CD8-positive, alpha-beta T cell (primary cell): ENCODE measurements at regions of chr6 and their contacts with region 1.

Region 1: GRCh38 chr6:143176090-143177021 is 115.7 kb downstream of the AIG1 start:
- DNase-seq: no peak
- ATAC-seq: no peak
- H3K4me3 ChIP-seq: no peak overlapping the region
- H3K4me3 Mint-ChIP-seq: no peak overlapping the region
- H3K27ac ChIP-seq: no peak overlapping the region
- H3K27ac Mint-ChIP-seq: no peak overlapping the region
- H3K4me1 ChIP-seq: no peaks in the 10 kb centered on the region
- H3K4me1 Mint-ChIP-seq: no peaks in the 10 kb centered on the region
- H3K27me3 ChIP-seq: no peaks in the 10 kb centered on the region
- H3K27me3 Mint-ChIP-seq: no peaks in the 10 kb centered on the region
- CTCF ChIP-seq: no peak

Region 2: GRCh38 chr6:143123081-143123480 is 53.3 kb before region 1 on chr6:
- CTCF ChIA-PET with region 1: no interaction called
- POLR2A ChIA-PET with region 1: no interaction called
- intact Hi-C with region 1: loop called in 1 of 2 experiments (anchors 1 kb)
- DNase-seq: no peak
- ATAC-seq: no peak
- H3K4me3 ChIP-seq: no peak overlapping the region
- H3K4me3 Mint-ChIP-seq: no peak overlapping the region
- H3K27ac ChIP-seq: no peak overlapping the region
- H3K27ac Mint-ChIP-seq: no peak overlapping the region
- H3K4me1 ChIP-seq: no peaks in the 10 kb centered on the region
- H3K4me1 Mint-ChIP-seq: no peaks in the 10 kb centered on the region
- H3K27me3 ChIP-seq: no peaks in the 10 kb centered on the region
- H3K27me3 Mint-ChIP-seq: no peaks in the 10 kb centered on the region
- CTCF ChIP-seq: no peak

Region 3: GRCh38 chr6:143136647-143137046 is 39.7 kb before region 1 on chr6:
- CTCF ChIA-PET with region 1: no interaction called
- POLR2A ChIA-PET with region 1: no interaction called
- intact Hi-C with region 1: no loop called
- DNase-seq: no peak
- ATAC-seq: no peak
- H3K4me3 ChIP-seq: no peak overlapping the region
- H3K4me3 Mint-ChIP-seq: peak overlapping the region; percentile 5
- H3K27ac ChIP-seq: no peak overlapping the region
- H3K27ac Mint-ChIP-seq: peak overlapping the region; percentile 56
- H3K4me1 ChIP-seq: peaks cover 17% of the 10 kb centered on the region
- H3K4me1 Mint-ChIP-seq: peaks cover 26% of the 10 kb centered on the region
- H3K27me3 ChIP-seq: no peaks in the 10 kb centered on the region
- H3K27me3 Mint-ChIP-seq: no peaks in the 10 kb centered on the region
- CTCF ChIP-seq: no peak

Region 4: GRCh38 chr6:143629104-143630080 is 453.0 kb after region 1 on chr6:
- CTCF ChIA-PET with region 1: no interaction called
- POLR2A ChIA-PET with region 1: no interaction called
- intact Hi-C with region 1: no loop called
- DNase-seq: no peak
- ATAC-seq: no peak
- H3K4me3 ChIP-seq: no peak overlapping the region
- H3K4me3 Mint-ChIP-seq: no peak overlapping the region
- H3K27ac ChIP-seq: no peak overlapping the region
- H3K27ac Mint-ChIP-seq: no peak overlapping the region
- H3K4me1 ChIP-seq: peaks cover 4% of the 10 kb centered on the region
- H3K4me1 Mint-ChIP-seq: peaks cover 23% of the 10 kb centered on the region
- H3K27me3 ChIP-seq: no peaks in the 10 kb centered on the region
- H3K27me3 Mint-ChIP-seq: no peaks in the 10 kb centered on the region
- CTCF ChIP-seq: no peak

Region 5: GRCh38 chr6:143745166-143746133 is 569.1 kb after region 1 on chr6:
- CTCF ChIA-PET with region 1: no interaction called
- POLR2A ChIA-PET with region 1: no interaction called
- intact Hi-C with region 1: loop called in 1 of 2 experiments (anchors 5 kb)
- DNase-seq: no peak
- ATAC-seq: no peak
- H3K4me3 ChIP-seq: no peak overlapping the region
- H3K4me3 Mint-ChIP-seq: no peak overlapping the region
- H3K27ac ChIP-seq: no peak overlapping the region
- H3K27ac Mint-ChIP-seq: no peak overlapping the region
- H3K4me1 ChIP-seq: no peaks in the 10 kb centered on the region
- H3K4me1 Mint-ChIP-seq: no peaks in the 10 kb centered on the region
- H3K27me3 ChIP-seq: no peaks in the 10 kb centered on the region
- H3K27me3 Mint-ChIP-seq: no peaks in the 10 kb centered on the region
- CTCF ChIP-seq: no peak